AG04450 (cell line): ENCODE measurements at regions of chr12 and their contacts with region 1.

Region 1: GRCh38 chr12:52171950-52172512 is 19.8 kb downstream of the KRT80 start:
- DNase-seq: no peak
- H3K4me3 ChIP-seq: no peak overlapping the region
- H3K27ac ChIP-seq: no peak overlapping the region
- H3K27me3 ChIP-seq: no peaks in the 10 kb centered on the region
- CTCF ChIP-seq: peak; percentile 37

Region 2: DNA sequence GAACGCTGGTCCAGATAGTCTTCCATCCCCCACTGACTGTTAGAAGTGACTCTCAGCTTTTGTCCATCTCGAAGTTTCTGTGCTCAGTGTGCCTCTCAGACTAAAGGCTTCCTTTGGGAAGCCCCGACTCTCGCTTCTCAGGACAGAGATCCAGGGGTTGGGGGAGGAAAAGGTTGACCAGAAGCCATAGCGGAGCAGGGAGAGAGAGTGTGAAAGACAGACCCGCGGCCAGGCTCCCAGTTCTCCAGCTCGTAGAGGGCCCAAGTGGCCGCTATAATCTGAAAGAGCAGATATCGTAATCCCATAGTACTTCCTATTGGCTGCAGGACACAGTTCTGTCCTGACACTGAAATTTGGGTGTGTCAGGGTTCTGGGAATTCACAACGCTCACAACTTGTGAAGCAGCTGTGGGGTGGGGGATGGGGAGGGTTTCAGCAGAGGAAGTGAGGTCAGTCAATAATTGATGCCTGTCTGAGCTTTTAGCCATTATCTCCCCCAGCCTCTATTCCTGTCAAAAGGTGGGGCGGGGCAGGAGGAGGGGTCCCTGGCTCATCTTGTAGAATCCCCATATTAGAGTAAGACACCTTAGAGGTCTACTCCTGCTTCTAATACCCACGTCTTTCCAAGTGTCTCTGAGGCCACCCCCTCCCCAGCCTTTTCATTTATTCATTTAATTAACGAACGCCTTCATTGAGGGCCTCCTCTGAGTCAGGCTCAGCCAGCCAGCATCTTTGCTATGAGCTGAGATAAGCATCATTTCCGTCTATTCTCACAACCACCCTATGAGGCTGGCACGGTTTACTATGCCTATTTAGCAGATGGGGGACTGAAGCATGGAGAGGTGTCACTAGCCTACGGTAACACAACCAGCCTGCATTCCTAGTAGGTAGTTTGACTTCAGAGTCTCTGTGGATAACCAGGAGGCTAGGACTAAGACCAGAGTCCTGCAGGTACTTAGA is 266.3 kb before region 1 on chr12:
- CTCF ChIA-PET with region 1: no interaction called
- POLR2A ChIA-PET with region 1: no interaction called
- DNase-seq: no peak
- H3K4me3 ChIP-seq: no peak overlapping the region
- H3K27ac ChIP-seq: no peak overlapping the region
- H3K27me3 ChIP-seq: no peaks in the 10 kb centered on the region
- CTCF ChIP-seq: no peak

Region 3: GRCh38 chr12:52203075-52203921 is 31.3 kb after region 1 on chr12:
- CTCF ChIA-PET with region 1: no interaction called
- POLR2A ChIA-PET with region 1: no interaction called
- DNase-seq: no peak
- H3K4me3 ChIP-seq: no peak overlapping the region
- H3K27ac ChIP-seq: peak overlapping the region; percentile 31
- H3K27me3 ChIP-seq: no peaks in the 10 kb centered on the region
- CTCF ChIP-seq: no peak

Region 4: GRCh38 chr12:52213512-52214420 is 41.7 kb after region 1 on chr12:
- CTCF ChIA-PET with region 1: interaction called, 10 read pairs
- POLR2A ChIA-PET with region 1: no interaction called
- DNase-seq: peak; percentile 61
- H3K4me3 ChIP-seq: no peak overlapping the region
- H3K27ac ChIP-seq: no peak overlapping the region
- H3K27me3 ChIP-seq: no peaks in the 10 kb centered on the region
- CTCF ChIP-seq: peak; percentile 99